Ascending aorta (tissue), 2 donors: ENCODE measurements at regions of chr6 and their contacts with region 1.

Region 1: GRCh38 chr6:40912158-40912946 is 126.7 kb downstream of the UNC5CL start:
- DNase-seq: no peak
- H3K4me3 ChIP-seq: no peak overlapping the region
- H3K27ac ChIP-seq: no peak overlapping the region
- H3K4me1 ChIP-seq: peaks cover 0 to 5% of the 10 kb centered on the region in 2 donors
- H3K27me3 ChIP-seq: no peaks in the 10 kb centered on the region
- CTCF ChIP-seq: peak; percentile 42 to 64 (median 56)

Region 2: DNA sequence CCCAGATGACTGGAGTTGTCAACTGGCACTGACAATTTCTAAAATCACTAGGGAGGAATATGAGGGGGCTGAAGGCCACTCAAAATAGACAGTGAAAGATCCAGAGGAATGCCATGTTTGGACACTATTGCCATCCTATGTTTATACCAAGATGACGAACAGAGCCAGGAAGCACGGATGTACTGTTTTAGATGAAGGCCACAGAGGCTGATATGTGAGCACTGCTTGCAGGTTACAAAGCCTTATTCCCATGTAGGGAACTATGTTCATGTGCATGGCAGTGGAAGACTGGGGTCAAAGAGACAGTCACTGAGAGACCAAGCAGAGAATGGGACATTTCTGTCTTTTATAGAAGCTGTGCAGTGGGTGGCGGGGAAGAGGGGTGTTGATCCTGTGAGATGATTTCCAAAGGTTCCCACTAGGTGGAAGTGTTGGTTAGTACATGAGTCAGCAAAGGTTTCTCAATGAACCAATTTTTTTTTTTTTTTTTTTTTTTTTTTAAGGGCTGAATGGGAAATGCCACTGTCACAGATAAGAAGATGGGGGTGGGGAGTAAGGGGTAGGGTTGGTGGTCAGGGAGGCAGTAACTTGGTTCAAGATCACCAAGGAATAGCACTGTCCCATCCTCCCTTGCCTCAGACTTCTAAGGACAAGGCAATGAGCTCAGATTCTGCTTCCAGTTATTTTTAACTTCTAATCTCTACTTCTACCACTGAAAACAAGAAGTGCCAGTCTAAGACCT is 931.3 kb before region 1 on chr6:
- intact Hi-C with region 1: loop called (anchors 10 kb)
- DNase-seq: no peak
- H3K4me3 ChIP-seq: no peak overlapping the region
- H3K27ac ChIP-seq: peak overlapping the region; percentile 62 to 65
- H3K4me1 ChIP-seq: peaks cover 0 to 24% of the 10 kb centered on the region in 2 donors
- H3K27me3 ChIP-seq: no peaks in the 10 kb centered on the region
- CTCF ChIP-seq: peak; percentile 43 to 57 (median 56)

Region 3: GRCh38 chr6:40845553-40845952 is 66.8 kb before region 1 on chr6:
- intact Hi-C with region 1: loop called (anchors 5 kb)
- DNase-seq: no peak
- H3K4me3 ChIP-seq: no peak overlapping the region
- H3K27ac ChIP-seq: no peak overlapping the region
- H3K4me1 ChIP-seq: no peaks in the 10 kb centered on the region
- H3K27me3 ChIP-seq: no peaks in the 10 kb centered on the region
- CTCF ChIP-seq: peak in 2 of 3 experiments; percentile 14 to 35

Region 4: GRCh38 chr6:40894962-40895799 is 17.2 kb before region 1 on chr6:
- intact Hi-C with region 1: loop called (anchors 2 kb)
- DNase-seq: no peak
- H3K4me3 ChIP-seq: no peak overlapping the region
- H3K27ac ChIP-seq: no peak overlapping the region
- H3K4me1 ChIP-seq: peaks cover 0 to 23% of the 10 kb centered on the region in 2 donors
- H3K27me3 ChIP-seq: no peaks in the 10 kb centered on the region
- CTCF ChIP-seq: peak; percentile 31 to 56 (median 40)